PC-3 (cell line): ENCODE measurements at regions of chr2 and their contacts with region 1.

Region 1: DNA sequence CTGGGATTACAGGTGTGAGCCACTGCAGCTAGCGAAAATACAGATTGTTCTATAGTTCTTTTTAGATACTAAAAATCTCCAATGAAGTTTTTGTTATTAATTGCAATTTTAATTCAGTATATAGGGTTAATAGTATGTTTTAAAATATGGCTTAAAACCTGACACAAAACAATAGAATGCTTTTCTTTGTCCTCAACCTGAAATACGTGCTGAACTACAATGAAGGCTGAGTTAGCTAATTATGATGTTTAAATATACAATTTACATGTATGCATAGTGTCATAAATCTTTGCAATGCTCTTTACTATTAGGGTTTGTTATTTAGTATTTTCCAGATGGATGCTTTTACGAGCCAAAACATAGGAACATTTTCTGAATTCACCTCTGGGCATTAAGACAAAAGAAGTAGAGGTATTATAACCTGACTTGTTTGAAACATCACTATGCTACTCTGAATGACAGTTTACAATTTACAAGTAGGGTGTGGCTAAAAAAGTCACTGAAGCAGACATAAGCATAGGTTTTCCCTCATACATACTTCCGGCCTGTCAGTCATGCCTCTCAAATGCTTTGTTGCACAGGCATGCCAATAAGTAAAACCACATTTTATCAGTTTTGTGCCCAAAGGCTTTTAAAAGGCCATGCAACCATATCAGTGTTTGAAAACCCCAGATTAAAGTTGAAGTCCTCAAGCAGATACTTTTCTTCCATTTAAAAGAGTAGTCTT is 168.3 kb downstream of the OTX1 start:
- DNase-seq: peak; percentile 77
- ATAC-seq: peak; percentile 100
- H3K4me3 ChIP-seq: no peak overlapping the region
- H3K27ac ChIP-seq: peak overlapping the region; percentile 9; the same call in 1 of the 2 replicates
- H3K4me1 ChIP-seq: peaks cover 8% of the 10 kb centered on the region
- H3K27me3 ChIP-seq: no peaks in the 10 kb centered on the region
- CTCF ChIP-seq: no peak

Region 2: DNA sequence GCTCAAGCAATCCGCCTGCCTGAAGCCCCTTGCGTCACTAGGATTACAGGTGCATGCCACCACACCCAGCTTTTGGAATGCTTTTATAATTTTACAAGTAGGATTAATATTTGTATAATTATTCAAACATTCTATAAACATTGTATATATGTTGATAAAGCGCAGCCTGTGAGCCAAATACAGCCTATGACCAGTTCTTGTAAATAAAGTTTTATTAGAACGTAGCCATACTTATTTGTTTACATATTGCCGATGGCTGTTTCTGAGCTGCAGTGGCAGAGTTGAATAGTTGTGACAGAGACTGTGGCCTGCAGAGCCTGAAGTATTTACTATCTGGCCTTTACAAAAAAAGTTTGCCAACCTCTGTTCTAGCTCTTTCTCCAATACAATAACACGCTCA is 64.3 kb after region 1 on chr2:
- CTCF ChIA-PET with region 1: no interaction called
- POLR2A ChIA-PET with region 1: no interaction called
- intact Hi-C with region 1: loop called (anchors 5 kb)
- DNase-seq: peak; percentile 68
- ATAC-seq: peak; percentile 94
- H3K4me3 ChIP-seq: no peak overlapping the region
- H3K27ac ChIP-seq: no peak overlapping the region
- H3K4me1 ChIP-seq: peaks cover 8% of the 10 kb centered on the region
- H3K27me3 ChIP-seq: no peaks in the 10 kb centered on the region
- CTCF ChIP-seq: no peak